Cardiac septum (tissue), 1 donor: ENCODE measurements at regions of chr4 and their contacts with region 1.

Region 1: GRCh38 chr4:157978680-157979361 is 194.0 kb downstream of the GASK1B start:
- DNase-seq: no peak

Region 2: GRCh38 chr4:156475322-156475721 is 1503.5 kb before region 1 on chr4:
- intact Hi-C with region 1: loop called (anchors 5 kb)
- DNase-seq: no peak

Region 3: GRCh38 chr4:157217708-157218107 is 761.1 kb before region 1 on chr4:
- intact Hi-C with region 1: loop called (anchors 5 kb)
- DNase-seq: no peak

Region 4: DNA sequence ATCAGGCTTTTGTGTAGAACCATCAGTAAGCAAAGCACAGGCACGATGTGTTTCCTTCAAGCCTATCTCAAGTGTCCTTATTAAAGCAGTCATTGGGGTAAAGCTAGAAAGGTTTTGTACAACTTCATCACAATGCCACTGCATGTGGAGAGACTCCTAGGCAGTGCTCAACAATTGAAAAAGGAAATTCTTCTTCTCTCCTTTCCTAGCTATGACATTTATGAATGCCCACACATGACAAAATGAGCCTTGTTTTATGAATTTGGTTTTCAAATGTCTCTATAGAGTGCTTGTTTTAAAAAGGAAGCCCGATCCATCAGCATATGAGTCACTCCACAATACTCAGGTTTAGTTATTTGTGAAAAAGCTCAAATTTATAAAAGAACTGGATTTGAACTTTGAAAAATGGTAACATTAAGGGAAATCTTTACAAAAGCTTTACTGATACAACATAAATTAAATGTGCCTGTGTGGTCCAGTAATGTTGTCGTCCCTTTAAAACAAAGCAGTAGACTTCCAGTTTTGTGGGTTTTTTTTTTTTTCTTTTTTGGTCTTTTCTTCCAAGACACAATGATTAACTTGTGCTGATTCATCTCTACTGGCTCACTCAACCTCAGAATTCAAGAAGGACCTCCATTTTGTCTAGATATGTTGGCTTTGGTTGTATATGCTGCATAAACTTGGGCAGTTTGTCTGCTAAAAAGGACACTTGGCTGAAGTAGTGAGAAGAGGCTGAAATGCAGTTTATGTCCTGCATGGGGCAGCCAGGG is 79.8 kb before region 1 on chr4:
- intact Hi-C with region 1: no loop called
- DNase-seq: no peak

Region 5: DNA sequence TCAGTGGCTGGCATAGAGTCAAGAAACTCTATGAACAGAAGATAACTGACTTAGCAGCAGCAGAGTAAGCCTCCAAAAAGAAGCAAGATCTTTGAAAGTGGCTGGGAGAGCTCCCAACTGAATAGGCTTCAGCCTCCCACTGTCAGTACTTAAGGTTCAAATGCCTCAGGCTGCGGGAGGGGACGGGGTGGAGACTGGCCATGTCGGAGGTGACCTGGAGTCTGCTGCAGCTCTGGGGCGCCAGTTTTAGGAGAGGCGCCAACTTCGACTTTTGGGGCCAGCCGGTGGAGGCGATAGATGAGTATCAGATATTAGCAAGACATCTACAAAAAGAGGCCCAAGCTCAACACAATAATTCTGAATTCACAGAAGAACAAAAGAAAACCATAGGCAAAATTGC is 298.7 kb after region 1 on chr4:
- intact Hi-C with region 1: no loop called
- DNase-seq: no peak